ENCODE measurements at regions of chr17 and their contacts with region 1.

Region 1: GRCh38 chr17:50123649-50124349 is 6.2 kb downstream of the SAMD14 start:
- DNase-seq: no peak
- H3K4me3 ChIP-seq: no peak overlapping the region
- H3K27ac ChIP-seq: no peak overlapping the region
- H3K4me1 ChIP-seq: peaks cover 7% of the 10 kb centered on the region
- H3K27me3 ChIP-seq: no peaks in the 10 kb centered on the region
- CTCF ChIP-seq: no peak

Region 2: DNA sequence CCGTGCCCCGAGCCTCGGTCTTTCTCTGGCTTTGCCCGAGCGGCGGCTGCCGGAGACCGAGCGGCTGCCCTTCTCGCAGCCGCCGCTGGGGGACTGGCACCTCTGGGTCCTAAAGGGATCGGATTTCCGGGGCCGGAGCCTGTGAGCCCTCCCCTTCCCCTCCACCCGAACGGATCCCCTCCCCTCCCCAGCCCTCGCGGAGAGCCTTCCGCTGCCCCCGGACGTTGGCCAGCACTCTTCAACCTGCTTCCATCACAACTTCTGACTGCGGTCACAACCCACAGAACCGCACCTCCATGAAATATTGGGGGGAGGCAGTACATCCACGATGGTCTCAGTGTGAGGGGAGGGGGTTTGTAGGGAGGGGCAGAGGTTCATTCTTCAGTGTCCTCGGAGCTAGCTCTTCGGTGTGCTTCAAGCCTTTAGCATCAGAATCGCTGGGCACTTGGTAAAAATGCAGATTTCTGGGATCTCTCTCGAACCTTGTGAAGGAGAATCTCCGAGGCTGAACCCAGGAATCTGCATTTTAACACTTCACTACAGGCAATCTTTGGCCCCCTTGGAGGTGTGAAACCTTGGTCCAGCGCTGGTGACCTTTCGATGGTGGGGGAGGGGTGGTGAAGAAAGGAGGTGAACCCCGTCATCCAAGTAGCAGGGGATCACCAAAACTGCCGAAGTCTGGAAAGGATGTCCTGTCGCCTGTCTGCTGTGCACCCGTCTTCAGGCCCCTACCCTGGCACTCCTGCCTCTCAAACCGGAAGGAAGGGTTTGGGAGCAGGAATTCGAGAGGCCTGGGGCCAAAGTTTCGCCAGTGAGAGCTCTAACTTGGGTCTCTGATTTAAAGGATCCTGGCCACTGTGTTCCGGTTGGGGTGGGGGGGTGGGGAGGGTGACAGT is 27.5 kb after region 1 on chr17:
- CTCF ChIA-PET with region 1: interaction called, 27 read pairs
- dilution Hi-C with region 1: no loop called
- in situ Hi-C with region 1: no loop called
- intact Hi-C with region 1: no loop called
- DNase-seq: peak; percentile 84
- H3K4me3 ChIP-seq: peak overlapping the region; percentile 18 to 75 (median 75)
- H3K27ac ChIP-seq: peak overlapping the region; percentile 19
- H3K4me1 ChIP-seq: peaks cover 67% of the 10 kb centered on the region
- H3K27me3 ChIP-seq: no peaks in the 10 kb centered on the region
- CTCF ChIP-seq: peak; percentile 35 to 71